ENCODE measurements at regions of chr1 and their contacts with region 1.

Region 1: GRCh38 chr1:186482661-186483255 is 21.8 kb upstream of the PDC start:
- DNase-seq: peak; percentile 53
- H3K4me3 ChIP-seq: no peak overlapping the region
- H3K27ac ChIP-seq: no peak overlapping the region
- H3K4me1 ChIP-seq: no peaks in the 10 kb centered on the region
- H3K27me3 ChIP-seq: no peaks in the 10 kb centered on the region
- CTCF ChIP-seq: peak; percentile 98

Region 2: DNA sequence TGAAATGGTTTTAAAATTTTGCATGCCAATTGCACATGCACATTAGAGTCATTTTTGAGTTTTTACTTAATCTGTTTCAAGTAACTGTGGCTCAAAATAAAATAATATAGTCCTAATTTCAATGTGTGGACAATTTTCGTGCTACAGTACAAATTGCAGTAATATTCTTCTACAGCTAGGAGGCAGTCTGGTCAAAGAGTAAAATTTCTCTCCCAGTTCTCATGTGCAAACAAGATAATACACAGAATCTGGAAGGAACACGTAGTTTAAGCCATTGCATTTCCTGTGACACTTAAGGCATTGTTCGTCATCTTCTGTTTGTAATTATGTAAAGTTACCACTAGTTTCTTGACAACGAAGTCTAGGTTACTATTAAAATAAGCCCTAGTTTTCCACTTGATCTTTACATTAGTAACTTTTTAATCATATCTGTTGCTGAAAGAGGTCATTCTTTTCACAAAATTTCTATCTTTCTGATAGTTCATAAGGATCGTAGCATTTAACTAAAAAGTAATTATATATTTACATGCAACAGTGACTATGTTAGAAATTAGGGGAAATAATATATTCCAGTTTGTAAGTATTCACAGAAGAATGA is 78.2 kb before region 1 on chr1:
- CTCF ChIA-PET with region 1: no interaction called
- dilution Hi-C with region 1: no loop called
- in situ Hi-C with region 1: no loop called
- intact Hi-C with region 1: loop called (anchors 5 kb)
- DNase-seq: peak; percentile 32
- H3K4me3 ChIP-seq: no peak overlapping the region
- H3K27ac ChIP-seq: no peak overlapping the region
- H3K4me1 ChIP-seq: no peaks in the 10 kb centered on the region
- H3K27me3 ChIP-seq: no peaks in the 10 kb centered on the region
- CTCF ChIP-seq: peak; percentile 62 to 83

Region 3: DNA sequence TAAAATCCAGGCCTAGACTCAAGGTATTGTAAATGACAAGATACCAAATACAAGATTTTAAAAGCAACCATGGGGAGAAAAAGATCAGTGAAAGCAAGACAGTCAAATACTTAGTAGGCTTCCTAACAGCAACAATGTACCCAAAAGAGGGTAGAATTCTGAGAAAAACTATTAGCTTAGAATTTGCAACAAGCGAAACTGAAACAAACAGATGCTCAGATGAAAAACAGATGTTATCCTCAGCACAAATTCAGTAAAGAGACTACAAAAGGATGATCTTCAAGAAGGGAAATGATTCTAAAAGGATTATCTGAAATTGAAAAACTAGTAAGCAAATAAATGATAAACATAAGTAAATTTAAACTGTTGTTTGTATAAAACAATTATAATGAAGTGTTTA is 61.8 kb before region 1 on chr1:
- CTCF ChIA-PET with region 1: no interaction called
- dilution Hi-C with region 1: no loop called
- in situ Hi-C with region 1: no loop called
- intact Hi-C with region 1: no loop called
- DNase-seq: no peak
- H3K4me3 ChIP-seq: no peak overlapping the region
- H3K27ac ChIP-seq: no peak overlapping the region
- H3K4me1 ChIP-seq: no peaks in the 10 kb centered on the region
- H3K27me3 ChIP-seq: no peaks in the 10 kb centered on the region
- CTCF ChIP-seq: no peak

Region 4: DNA sequence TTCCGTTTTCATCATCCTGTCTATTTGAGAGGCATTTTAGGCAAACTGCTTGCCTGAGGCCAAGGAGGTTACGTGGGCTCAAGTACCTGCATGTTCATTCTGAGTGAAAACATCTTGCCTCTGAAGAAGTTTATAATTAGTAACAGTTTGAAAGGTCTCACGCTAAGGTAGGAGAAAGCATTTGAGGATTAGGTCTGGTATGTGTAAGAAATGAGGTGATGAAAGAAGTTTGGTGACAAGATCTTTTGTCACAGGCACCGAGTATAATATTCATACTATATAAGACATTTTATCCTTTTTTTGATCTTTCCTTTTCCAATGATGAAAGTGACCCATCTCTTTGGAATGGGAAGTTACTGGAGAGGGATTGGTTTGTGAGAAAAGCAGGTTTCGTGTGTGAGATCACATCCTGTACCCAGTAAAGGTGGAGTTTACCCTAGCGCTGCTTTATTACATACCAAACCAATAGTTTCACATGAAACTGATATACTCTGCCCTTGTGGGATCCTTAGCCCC is 76.9 kb after region 1 on chr1:
- CTCF ChIA-PET with region 1: no interaction called
- dilution Hi-C with region 1: no loop called
- in situ Hi-C with region 1: no loop called
- intact Hi-C with region 1: loop called (anchors 5 kb)
- DNase-seq: peak; percentile 96
- H3K4me3 ChIP-seq: peak overlapping the region in 1 of 3 experiments; percentile 35
- H3K27ac ChIP-seq: peak overlapping the region; percentile 100
- H3K4me1 ChIP-seq: peaks cover 14% of the 10 kb centered on the region
- H3K27me3 ChIP-seq: no peaks in the 10 kb centered on the region
- CTCF ChIP-seq: no peak

Region 5: GRCh38 chr1:186763107-186763506 is 280.3 kb after region 1 on chr1:
- CTCF ChIA-PET with region 1: no interaction called
- dilution Hi-C with region 1: no loop called
- in situ Hi-C with region 1: no loop called
- intact Hi-C with region 1: loop called (anchors 1 kb)
- DNase-seq: peak; percentile 54
- H3K4me3 ChIP-seq: no peak overlapping the region
- H3K27ac ChIP-seq: no peak overlapping the region
- H3K4me1 ChIP-seq: no peaks in the 10 kb centered on the region
- H3K27me3 ChIP-seq: no peaks in the 10 kb centered on the region
- CTCF ChIP-seq: no peak

Region 6: DNA sequence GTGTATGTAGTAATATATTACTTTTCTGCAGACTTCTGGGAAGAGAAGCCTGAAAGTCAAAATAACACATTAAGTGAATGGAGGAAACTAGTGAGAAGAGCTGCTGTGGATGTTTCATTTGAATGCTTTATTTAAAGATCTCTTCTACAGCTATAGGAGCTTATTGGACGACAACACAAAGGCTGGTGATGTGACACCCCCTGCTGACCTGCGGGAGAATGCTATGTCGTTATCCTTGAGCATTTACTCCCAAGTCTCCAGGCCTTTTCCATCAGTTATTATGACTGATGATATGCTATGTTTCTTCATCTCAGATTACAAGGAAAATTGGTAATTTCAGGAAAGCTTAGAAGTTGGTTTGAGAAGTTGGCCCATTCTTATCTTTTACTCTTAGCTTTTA is 323.7 kb after region 1 on chr1:
- CTCF ChIA-PET with region 1: no interaction called
- dilution Hi-C with region 1: no loop called
- in situ Hi-C with region 1: no loop called
- intact Hi-C with region 1: loop called (anchors 5 kb)
- DNase-seq: peak; percentile 27
- H3K4me3 ChIP-seq: no peak overlapping the region
- H3K27ac ChIP-seq: no peak overlapping the region
- H3K4me1 ChIP-seq: no peaks in the 10 kb centered on the region
- H3K27me3 ChIP-seq: no peaks in the 10 kb centered on the region
- CTCF ChIP-seq: peak; percentile 35 to 59

Region 7: DNA sequence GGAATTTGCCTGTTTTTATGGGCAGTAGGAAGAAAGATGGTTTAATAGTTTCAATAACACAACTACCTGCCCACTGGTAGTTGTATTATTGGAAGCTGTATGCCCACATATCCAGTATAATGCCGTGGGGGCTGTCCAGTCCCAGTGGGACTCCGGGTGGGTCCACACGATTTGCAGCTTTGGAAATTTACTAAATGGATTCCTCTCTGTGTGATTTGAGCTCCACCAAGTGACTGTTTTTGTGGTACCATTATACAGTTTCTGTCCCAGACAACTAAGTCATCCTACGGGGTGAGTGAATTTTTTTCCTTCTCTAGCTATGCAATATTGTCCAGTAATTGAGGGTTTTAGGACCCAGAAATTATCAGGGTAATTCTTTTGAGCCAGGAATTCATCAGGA is 432.8 kb after region 1 on chr1:
- CTCF ChIA-PET with region 1: interaction called, 4 read pairs
- dilution Hi-C with region 1: no loop called
- in situ Hi-C with region 1: no loop called
- intact Hi-C with region 1: loop called (anchors 1 kb)
- DNase-seq: no peak
- H3K4me3 ChIP-seq: no peak overlapping the region
- H3K27ac ChIP-seq: no peak overlapping the region
- H3K4me1 ChIP-seq: no peaks in the 10 kb centered on the region
- H3K27me3 ChIP-seq: no peaks in the 10 kb centered on the region
- CTCF ChIP-seq: peak in 1 of 2 donors; percentile 30